Activated naive CD4-positive, alpha-beta T cell treated with anti-CD3 and anti-CD28 coated beads for 36 hours (primary cell): ENCODE measurements at regions of chr1 and their contacts with region 1.

Region 1: DNA sequence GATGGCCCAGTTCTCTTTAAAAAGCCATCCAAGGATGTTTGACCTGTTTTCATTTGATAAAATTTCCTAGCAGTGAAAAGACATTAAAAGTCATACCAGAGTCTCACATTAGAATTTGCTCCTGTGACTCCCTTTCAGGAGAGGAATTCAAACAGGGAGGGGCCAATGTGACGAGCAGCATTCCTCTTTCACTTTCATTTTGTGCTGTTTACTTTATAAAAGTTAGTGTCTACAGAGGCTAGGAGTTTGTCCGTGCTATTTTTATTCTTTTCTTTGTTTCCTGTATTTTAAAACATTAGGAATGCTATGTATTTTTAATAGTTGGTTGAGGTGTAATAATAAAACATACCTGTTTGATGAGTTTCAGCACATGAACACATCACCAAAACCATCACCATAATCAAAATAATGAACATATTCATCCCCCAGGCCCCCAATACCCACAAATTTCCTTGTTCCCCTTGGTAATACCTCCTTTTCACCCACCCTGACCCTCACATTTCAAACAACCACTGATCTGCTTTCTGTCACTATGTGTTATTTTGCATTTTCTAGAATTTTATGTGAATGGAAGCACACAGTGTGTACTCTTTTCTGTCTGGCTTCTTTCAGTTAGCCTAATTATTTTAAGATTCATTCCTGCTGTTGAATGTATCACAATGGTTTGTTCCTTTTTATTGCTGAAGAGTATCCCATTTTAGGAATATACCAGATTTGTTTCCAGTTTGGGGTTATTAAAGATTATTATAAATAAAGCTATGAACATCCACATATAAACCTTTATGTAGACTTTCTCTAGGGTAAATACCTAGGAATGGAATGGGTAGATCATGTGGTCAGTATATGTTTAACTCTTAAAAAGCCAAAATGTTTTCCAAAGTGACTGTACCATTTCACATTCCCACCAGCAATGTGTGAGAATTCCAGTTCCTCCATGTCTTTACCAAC is 129.5 kb downstream of the TENT5C start:
- DNase-seq: peak; percentile 58
- H3K4me3 Mint-ChIP-seq: peak overlapping the region; percentile 64
- H3K27ac Mint-ChIP-seq: peak overlapping the region; percentile 81
- H3K4me1 Mint-ChIP-seq: peaks cover 11% of the 10 kb centered on the region
- H3K27me3 Mint-ChIP-seq: no peaks in the 10 kb centered on the region

Region 2: DNA sequence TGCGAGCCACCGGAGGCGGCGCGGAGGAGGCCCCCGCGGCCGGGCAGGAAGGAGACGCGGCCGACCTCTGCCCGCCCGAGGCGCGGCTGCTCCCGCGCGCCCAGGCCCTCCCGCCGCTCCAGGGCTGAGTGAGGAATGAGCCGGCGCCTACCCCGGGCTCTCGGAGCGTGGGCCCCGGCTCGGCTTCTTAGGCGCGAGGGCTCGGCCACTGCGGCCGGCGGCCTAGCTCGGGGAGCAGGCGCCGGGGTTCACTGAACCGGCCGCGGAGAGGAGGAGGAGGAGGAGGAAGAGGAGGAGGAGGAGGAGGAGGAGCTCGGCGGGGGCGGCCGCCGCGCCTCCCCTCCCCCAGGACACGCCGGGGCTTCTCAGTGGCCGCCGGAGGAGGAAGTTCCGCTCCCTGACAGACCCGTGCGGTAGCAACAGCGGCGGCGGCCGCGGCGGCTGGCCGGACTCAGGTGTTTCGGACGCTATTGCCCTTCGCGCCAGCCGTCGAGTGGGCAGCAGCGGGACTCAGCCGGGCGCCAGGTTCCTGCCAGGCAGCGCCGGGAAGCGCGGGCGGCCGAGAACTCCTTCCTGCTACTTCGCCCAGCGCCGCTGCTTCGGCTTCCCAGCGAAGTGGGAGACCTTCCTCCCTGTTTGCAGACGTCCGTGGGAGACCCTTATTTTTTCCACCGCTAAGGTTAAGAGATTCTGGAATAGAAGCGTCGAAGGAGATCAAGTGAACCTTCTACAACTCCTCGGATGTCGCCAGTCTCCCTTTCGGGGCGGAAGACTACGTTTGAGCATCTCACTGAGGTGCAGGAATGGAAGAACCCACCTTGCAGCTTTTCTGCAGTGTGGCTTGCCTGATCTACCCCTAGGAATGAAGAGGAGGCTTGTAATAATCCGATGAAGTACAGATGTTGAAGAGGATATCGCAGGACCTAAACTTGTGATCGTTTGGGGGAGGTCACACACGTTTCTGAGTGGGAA is 368.0 kb before region 1 on chr1 and contains the start of gene MAN1A2:
- CTCF ChIA-PET with region 1: no interaction called
- intact Hi-C with region 1: loop called (anchors 5 kb)
- DNase-seq: peak; percentile 76
- H3K4me3 Mint-ChIP-seq: peak within 1 kb of the TSS; percentile 94
- H3K27ac Mint-ChIP-seq: peak within 1 kb of the TSS; percentile 94
- H3K4me1 Mint-ChIP-seq: peaks cover 48% of the 10 kb centered on the region
- H3K27me3 Mint-ChIP-seq: no peaks in the 10 kb centered on the region
- total RNA-seq, gene MAN1A2: 14.6 to 17.4 TPM

Region 3: DNA sequence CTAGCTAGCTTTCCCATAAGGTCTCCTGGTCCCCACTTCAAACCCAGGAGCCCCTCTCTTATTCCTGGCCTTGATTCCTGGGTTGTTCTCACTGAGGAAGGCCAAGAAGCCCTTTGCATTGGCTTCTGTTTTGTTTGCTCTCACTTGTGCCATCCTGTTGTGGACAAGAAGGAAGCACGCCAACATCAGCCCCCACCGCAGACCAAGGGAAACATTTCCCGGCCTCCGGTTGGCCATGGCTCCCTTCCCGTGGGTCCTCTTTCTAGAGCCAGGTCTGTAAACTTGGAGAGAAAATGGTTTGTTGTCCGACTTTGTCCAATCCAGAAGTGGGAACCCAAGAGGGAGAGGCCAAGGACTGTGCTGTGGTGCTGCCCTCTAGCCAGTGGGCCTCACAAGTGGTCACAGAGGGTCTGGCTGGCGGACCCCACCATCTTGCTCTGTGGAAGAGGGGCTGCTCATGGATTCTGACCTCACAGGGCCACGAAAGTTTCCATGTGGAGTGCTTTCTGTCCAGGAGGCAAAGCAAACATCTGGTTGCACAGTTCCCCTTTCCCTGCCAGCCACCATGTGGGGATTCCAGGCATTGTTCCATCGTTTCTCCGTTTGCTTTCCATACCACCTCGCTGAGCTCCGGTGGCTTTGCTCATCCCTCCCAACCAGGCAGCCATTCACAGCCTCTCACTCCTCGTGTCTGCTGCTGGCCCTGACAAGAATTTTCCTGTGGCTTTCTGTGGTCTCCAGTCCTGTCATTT is 148.4 kb before region 1 on chr1:
- CTCF ChIA-PET with region 1: no interaction called
- intact Hi-C with region 1: no loop called
- DNase-seq: no peak
- H3K4me3 Mint-ChIP-seq: no peak overlapping the region
- H3K27ac Mint-ChIP-seq: no peak overlapping the region
- H3K4me1 Mint-ChIP-seq: no peaks in the 10 kb centered on the region
- H3K27me3 Mint-ChIP-seq: peaks cover 2% of the 10 kb centered on the region

Region 4: GRCh38 chr1:117710710-117711109 is 24.6 kb before region 1 on chr1:
- CTCF ChIA-PET with region 1: no interaction called
- intact Hi-C with region 1: no loop called
- DNase-seq: no peak
- H3K4me3 Mint-ChIP-seq: no peak overlapping the region
- H3K27ac Mint-ChIP-seq: no peak overlapping the region
- H3K4me1 Mint-ChIP-seq: no peaks in the 10 kb centered on the region
- H3K27me3 Mint-ChIP-seq: peaks cover 5% of the 10 kb centered on the region